Caco-2 (cell line): ENCODE measurements at regions of chr16 and their contacts with region 1.

Region 1: GRCh38 chr16:483341-484075 is 44.0 kb upstream of the CAPN15 start:
- DNase-seq: peak; percentile 70 to 72
- H3K4me3 ChIP-seq: no peak overlapping the region
- H3K4me3 Mint-ChIP-seq: peak overlapping the region; percentile 47
- H3K27ac Mint-ChIP-seq: peak overlapping the region; percentile 79
- H3K4me1 ChIP-seq: peaks cover 28% of the 10 kb centered on the region
- H3K4me1 Mint-ChIP-seq: peaks cover 22% of the 10 kb centered on the region
- H3K27me3 ChIP-seq: no peaks in the 10 kb centered on the region
- H3K27me3 Mint-ChIP-seq: no peaks in the 10 kb centered on the region
- CTCF ChIP-seq: no peak

Region 2: GRCh38 chr16:425082-425718 is 58.3 kb before region 1 on chr16 and contains the start of gene RAB11FIP3:
- CTCF ChIA-PET with region 1: interaction called, 3 read pairs
- POLR2A ChIA-PET with region 1: no interaction called
- intact Hi-C with region 1: loop called (anchors 10 kb)
- DNase-seq: peak; percentile 72 to 82
- H3K4me3 ChIP-seq: peak within 1 kb of the TSS; percentile 50
- H3K4me3 Mint-ChIP-seq: peak within 1 kb of the TSS; percentile 73
- H3K27ac Mint-ChIP-seq: no peak within 1 kb of the TSS
- H3K4me1 ChIP-seq: no peaks in the 10 kb centered on the region; the same call in 1 of the 2 replicates
- H3K4me1 Mint-ChIP-seq: peaks cover 11% of the 10 kb centered on the region
- H3K27me3 ChIP-seq: no peaks in the 10 kb centered on the region; the same call in 1 of the 2 replicates
- H3K27me3 Mint-ChIP-seq: no peaks in the 10 kb centered on the region
- CTCF ChIP-seq: peak in 1 of 2 experiments; percentile 56
- total RNA-seq, gene RAB11FIP3: 31.3 and 35.8 TPM in 2 replicates